ENCODE measurements at regions of chr7 and their contacts with region 1.

Region 1: GRCh38 chr7:35519971-35520809 is 174.7 kb downstream of the HERPUD2 start:
- DNase-seq: peak; percentile 72
- CTCF ChIP-seq: peak; percentile 70

Region 2: GRCh38 chr7:35424869-35425495 is 95.2 kb before region 1 on chr7:
- CTCF ChIA-PET with region 1: interaction called, 25 read pairs
- POLR2A ChIA-PET with region 1: no interaction called
- DNase-seq: peak; percentile 68
- CTCF ChIP-seq: peak; percentile 65

Region 3: GRCh38 chr7:35499226-35499625 is 21.0 kb before region 1 on chr7:
- CTCF ChIA-PET with region 1: interaction called, 10 read pairs
- POLR2A ChIA-PET with region 1: no interaction called
- DNase-seq: no peak
- CTCF ChIP-seq: no peak

Region 4: DNA sequence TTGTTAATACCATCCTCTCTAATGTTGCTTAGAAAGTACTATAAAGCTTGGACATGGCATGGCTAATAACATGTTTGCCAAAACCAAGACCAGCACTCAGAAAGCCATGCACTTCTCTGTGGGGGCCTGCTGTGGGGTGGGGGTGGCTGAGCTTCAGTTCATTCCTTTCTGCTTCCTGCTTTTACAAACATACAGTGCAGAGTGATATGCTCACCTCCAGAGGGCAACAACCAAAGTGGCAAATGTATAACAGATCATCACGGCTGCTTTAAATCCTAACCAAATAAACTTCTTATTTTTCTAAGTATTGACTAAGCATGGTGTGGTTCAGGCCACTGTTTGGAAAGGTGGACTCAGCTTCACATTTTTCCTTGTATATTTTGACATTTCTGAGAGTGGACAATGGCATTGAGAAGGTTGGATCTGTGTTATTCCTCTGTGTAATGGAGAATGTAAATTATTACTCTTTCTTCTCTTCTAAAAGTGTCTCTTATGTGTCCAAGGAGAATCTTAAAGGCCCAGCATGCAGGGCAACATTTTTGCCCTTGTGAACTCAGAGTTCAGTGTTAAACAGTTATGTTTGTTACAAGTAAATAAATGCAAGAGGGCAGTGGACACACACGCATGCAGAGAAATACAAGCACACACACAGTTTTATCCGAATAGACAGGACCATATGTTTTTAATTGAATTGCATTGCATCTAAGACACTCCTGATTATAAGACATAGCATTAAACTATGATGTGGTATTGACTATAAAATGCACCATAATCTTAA is 11.4 kb before region 1 on chr7:
- CTCF ChIA-PET with region 1: interaction called, 12 read pairs
- POLR2A ChIA-PET with region 1: no interaction called
- DNase-seq: no peak
- CTCF ChIP-seq: no peak

Region 5: DNA sequence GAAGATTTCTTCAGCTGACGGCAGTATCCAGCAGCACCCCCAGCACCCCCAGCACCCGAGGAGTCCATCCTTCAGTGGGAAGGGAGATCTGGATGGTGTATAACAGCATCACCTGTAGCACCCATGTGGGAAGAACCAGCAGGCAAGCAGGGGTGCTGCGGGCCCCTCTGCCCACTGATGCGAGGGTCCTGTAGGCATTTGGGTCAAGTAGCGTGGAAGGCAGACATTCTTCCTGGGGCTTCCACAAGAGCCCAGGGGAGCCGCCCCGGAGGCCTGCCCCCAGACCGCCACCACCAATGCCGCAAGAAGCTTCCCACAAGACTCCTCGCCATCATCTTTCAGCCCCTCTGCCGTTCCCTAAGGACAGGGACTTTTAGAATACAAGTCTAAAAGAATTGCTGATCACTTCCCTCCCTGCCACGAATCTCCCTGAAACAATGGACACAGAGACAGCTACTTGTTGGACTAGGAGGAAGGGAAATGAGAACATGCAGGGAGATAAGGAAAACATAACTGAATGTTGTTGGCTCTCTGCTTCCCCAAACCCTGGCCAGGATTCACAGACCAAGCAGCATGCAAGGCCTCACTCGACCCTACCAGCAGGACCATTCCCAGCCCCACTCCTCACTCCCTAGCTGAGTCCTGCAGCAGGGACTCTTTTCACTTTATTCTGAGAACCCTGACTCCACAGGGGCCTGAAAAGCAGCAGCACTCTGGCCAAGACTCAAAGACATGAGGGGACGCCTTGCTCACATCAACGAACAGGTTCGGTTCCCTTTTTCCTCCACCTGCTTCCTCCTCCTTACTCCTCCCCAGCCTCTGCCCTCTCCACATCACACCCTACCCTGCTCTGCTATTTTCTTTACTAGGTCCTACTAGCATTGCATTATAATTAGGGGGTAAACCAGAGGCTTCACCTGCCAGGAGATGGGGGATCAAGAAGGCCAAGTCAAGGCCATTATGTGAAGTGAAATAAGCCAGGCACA is 10.2 kb after region 1 on chr7:
- CTCF ChIA-PET with region 1: interaction called, 29 read pairs
- POLR2A ChIA-PET with region 1: no interaction called
- DNase-seq: no peak
- CTCF ChIP-seq: no peak

Region 6: DNA sequence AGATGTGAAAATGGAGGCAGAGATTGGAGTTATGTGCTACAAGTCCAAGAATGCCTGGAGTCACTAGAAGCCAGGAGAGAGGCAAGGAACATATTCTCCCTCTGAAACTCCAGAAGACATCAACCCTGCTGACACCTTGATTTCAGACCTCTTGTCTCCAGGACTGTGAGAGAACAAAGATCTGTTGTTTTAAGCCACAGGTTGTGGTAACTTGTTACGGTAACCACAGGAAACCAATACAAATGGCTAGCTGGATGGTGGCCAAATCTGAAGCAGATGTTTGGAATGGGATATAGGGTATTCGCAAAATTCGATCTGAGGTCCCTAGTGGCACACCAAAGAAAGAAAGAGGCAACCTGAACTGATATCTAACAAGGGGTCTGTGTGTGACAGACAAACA is 45.7 kb after region 1 on chr7:
- CTCF ChIA-PET with region 1: no interaction called
- POLR2A ChIA-PET with region 1: no interaction called
- DNase-seq: no peak
- CTCF ChIP-seq: no peak

Measured in GM10248 (cell line).